Psoas muscle (tissue), 8 donors: ENCODE measurements at regions of chr6 and their contacts with region 1.

Region 1: DNA sequence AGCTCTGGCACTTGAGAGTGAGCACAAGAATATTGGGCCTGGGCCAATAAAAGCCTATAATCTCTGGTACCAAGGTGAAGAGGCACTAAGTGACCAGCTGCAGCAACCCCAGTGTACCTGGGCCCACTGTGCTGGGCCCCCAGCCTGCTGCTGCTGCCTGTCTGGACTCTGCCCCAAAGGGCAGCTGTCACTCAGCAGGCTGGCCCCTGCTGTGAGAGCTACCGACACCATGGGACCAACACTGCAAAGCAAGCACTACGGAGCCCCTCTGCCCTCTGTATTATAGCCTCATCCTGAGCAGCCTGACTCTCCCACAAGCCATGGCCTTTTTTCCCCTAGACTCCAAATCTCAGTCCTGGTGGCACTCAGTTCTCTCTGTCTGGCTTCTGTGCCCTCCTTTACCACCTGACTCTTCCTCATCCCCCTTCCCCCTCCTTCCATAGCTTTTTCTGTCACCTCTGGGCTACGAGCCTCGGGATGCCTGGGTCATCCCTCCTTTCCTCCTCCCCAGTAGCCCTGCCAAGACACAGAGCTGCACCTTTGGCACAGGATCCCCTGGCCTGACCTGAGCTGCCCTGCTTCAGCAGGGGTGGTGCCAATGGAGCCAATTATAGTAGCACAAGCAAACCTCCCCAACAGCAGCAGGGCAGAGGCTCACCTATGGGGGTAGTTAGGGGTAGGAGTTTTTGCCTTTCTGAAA is 14.2 kb downstream of the RRP36 start:
- DNase-seq: peak; percentile 71 to 93
- ATAC-seq: peak; percentile 96 to 98 (median 98)
- H3K4me3 ChIP-seq: no peak overlapping the region
- H3K27ac ChIP-seq: peak overlapping the region; percentile 81
- H3K4me1 ChIP-seq: peaks cover 24% of the 10 kb centered on the region
- H3K27me3 ChIP-seq: no peaks in the 10 kb centered on the region
- CTCF ChIP-seq: no peak

Region 2: GRCh38 chr6:43053545-43054205 is 18.0 kb after region 1 on chr6 and contains the start of gene CUL7:
- intact Hi-C with region 1: loop called in 1 of 2 experiments (anchors 2 kb)
- DNase-seq: peak; percentile 92 to 96
- ATAC-seq: peak; percentile 94 to 96 (median 94)
- H3K4me3 ChIP-seq: peak within 1 kb of the TSS; percentile 80
- H3K27ac ChIP-seq: peak within 1 kb of the TSS; percentile 90
- H3K4me1 ChIP-seq: peaks cover 17% of the 10 kb centered on the region
- H3K27me3 ChIP-seq: no peaks in the 10 kb centered on the region
- CTCF ChIP-seq: no peak
- total RNA-seq, gene CUL7: 9.3 to 23.4 (median 20.1) TPM